ENCODE measurements at regions of chr6 and their contacts with region 1.

Region 1: GRCh38 chr6:82178077-82178758 is 69.3 kb downstream of the IBTK start:
- DNase-seq: no peak
- H3K4me3 ChIP-seq: no peak overlapping the region
- H3K27ac ChIP-seq: no peak overlapping the region
- H3K4me1 ChIP-seq: no peaks in the 10 kb centered on the region
- H3K27me3 ChIP-seq: no peaks in the 10 kb centered on the region
- CTCF ChIP-seq: peak; percentile 48

Region 2: DNA sequence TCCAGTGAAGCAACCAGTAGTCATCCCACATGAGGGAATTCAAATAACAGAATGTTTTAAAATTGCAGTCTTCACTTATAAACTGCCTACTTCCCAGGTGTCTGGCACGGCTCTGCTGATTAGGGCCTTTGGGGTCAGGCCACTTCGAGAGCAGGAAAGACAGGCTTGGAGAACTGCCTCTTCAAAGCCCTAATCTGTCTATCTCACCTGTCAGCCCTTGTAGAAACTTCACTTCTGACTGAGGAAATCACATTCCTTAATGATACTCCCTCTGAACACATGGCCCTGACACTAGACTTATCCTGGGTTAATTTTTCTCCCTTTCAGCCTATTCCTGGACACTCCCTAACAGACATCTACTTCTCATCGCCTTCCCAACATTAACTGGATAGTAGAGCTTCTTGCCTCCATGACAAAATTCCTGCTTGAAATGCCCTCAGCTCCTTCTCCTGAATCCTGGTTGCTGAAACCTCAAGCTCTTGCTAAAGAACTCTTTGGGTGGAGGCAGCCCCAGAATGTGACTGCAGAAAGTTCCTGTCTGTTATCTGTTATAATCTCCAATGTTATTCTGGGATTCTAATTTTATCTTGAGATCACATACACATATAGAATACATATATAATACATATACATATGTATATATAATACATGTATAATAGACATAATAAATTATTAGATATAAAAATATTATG is 884.1 kb before region 1 on chr6:
- CTCF ChIA-PET with region 1: interaction called, 12 read pairs
- POLR2A ChIA-PET with region 1: no interaction called
- intact Hi-C with region 1: no loop called
- DNase-seq: no peak
- H3K4me3 ChIP-seq: no peak overlapping the region
- H3K27ac ChIP-seq: no peak overlapping the region
- H3K4me1 ChIP-seq: no peaks in the 10 kb centered on the region
- H3K27me3 ChIP-seq: no peaks in the 10 kb centered on the region
- CTCF ChIP-seq: no peak

Region 3: DNA sequence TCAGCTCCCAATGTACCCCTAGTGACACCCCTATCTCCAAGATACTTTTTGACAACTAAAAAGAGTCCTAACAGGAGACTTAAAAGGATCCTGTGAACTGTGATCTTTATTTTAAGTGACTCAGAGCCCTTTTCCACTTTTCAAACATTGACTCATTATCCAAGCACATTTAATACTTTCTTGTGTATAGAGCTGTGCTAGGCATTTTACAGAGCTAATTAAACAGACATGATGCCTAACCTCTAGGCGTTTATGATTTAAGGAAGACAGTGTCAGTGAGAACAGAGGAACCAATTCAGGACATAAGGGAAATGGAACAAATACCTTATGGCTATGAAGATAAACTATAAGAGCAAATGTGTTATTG is 468.0 kb after region 1 on chr6:
- CTCF ChIA-PET with region 1: no interaction called
- POLR2A ChIA-PET with region 1: no interaction called
- intact Hi-C with region 1: no loop called
- DNase-seq: peak in 1 of 2 experiments; percentile 43
- H3K4me3 ChIP-seq: no peak overlapping the region
- H3K27ac ChIP-seq: peak overlapping the region; percentile 27; the same call in 1 of the 2 replicates
- H3K4me1 ChIP-seq: peaks cover 21% of the 10 kb centered on the region
- H3K27me3 ChIP-seq: no peaks in the 10 kb centered on the region
- CTCF ChIP-seq: no peak

Measured in PC-9 (cell line).